ENCODE measurements at regions of chr4 and their contacts with region 1.

Region 1: GRCh38 chr4:183190900-183191527 is 92.0 kb downstream of the WWC2 start:
- DNase-seq: peak; percentile 39
- ATAC-seq: peak; percentile 71
- H3K4me3 ChIP-seq: no peak overlapping the region
- H3K27ac ChIP-seq: no peak overlapping the region
- H3K4me1 ChIP-seq: peaks cover 45% of the 10 kb centered on the region
- H3K27me3 ChIP-seq: no peaks in the 10 kb centered on the region
- CTCF ChIP-seq: no peak
- EP300 ChIP-seq: peak in 1 of 2 experiments; percentile 27; a peak in 1 of 4 replicates
- POLR2A ChIP-seq: no peak
- RAD21 ChIP-seq: no peak

Region 2: DNA sequence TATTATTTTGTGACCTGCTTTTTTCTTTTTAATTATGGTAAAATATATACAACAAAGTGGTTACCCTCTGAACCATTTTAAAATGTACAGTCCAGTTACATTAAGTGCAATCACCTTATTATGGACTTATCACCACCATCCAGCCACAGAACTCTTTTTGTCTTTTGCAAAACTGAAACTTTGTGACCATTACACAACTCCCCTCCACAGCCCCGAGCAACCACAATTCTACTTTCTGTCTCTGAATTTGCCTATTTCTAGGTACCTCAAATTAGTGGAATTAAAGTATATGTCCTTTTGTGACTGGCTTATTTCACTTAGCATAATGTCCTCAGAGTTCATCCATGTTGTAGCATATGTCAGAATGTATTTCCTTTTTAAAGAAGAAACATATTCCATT is 131.2 kb before region 1 on chr4:
- CTCF ChIA-PET with region 1: no interaction called
- POLR2A ChIA-PET with region 1: no interaction called
- in situ Hi-C with region 1: no loop called
- intact Hi-C with region 1: no loop called
- DNase-seq: no peak
- ATAC-seq: no peak
- H3K4me3 ChIP-seq: no peak overlapping the region
- H3K27ac ChIP-seq: no peak overlapping the region
- H3K4me1 ChIP-seq: peaks cover 13% of the 10 kb centered on the region
- H3K27me3 ChIP-seq: no peaks in the 10 kb centered on the region
- CTCF ChIP-seq: no peak
- EP300 ChIP-seq: no peak
- POLR2A ChIP-seq: no peak
- RAD21 ChIP-seq: no peak

Region 3: GRCh38 chr4:183175631-183176232 is 15.3 kb before region 1 on chr4:
- CTCF ChIA-PET with region 1: no interaction called
- POLR2A ChIA-PET with region 1: no interaction called
- in situ Hi-C with region 1: no loop called
- intact Hi-C with region 1: loop called (anchors 1 kb)
- DNase-seq: peak; percentile 89
- ATAC-seq: peak; percentile 73
- H3K4me3 ChIP-seq: no peak overlapping the region; a peak in 1 of 6 replicates
- H3K27ac ChIP-seq: peak overlapping the region; percentile 64
- H3K4me1 ChIP-seq: peaks cover 63% of the 10 kb centered on the region
- H3K27me3 ChIP-seq: no peaks in the 10 kb centered on the region
- CTCF ChIP-seq: no peak
- EP300 ChIP-seq: 0 out of 4 replicates have a peak, but pooled peaks of 1 of the 2 experiments have one; percentile 26
- POLR2A ChIP-seq: no peak
- RAD21 ChIP-seq: no peak

Measured in HepG2 (cell line).